Activated naive CD4-positive, alpha-beta T cell treated with anti-CD3 and anti-CD28 coated beads, Interleukin-2, amount 10 ng/mL, durations not matched to agents 7 days and 5 days (primary cell): ENCODE measurements at regions of chr2 and their contacts with region 1.

Region 1: DNA sequence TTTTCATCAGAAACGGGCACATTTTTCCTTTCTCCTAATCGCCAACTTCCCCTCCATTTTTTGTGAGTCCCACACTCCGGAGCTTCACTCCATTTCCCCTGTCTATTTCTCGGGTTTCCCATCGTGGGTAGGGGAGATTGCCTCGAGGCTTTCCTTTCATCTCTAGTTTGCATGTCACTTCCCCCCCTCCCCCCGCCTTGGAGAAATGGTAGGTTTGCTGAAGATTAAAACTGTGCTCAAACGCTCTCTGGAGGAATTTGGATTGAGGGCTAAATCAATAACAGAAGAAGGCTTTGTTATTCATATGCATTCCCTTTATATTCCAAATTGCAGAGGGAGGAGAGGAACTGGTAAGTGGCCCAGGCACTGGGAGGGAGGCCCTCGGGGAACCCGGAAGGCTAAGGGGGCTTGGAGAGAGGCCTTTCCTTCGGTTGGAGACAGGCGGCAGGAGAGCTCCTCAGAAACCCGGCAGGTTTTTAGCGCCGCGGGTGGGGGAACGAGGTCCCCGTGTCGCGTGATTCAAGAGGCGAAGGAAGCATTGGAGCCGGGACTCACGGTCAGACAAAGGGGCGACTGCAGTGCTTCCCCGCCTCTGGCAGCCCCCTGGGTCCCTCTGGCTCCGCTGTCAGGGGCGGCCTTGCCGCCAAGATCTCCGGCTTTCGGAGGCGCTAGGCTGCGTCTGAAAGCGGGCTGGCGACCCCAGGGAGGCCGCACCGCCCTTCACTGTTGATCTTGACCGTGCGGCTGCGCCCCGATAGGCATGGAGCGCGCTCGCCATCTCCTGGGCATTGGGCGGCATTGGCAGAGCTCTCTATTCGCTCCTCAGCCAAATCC is 2.4 kb upstream of the HOXD12 start:
- DNase-seq: peak; percentile 69
- H3K4me3 Mint-ChIP-seq: peak overlapping the region; percentile 65
- H3K27ac Mint-ChIP-seq: no peak overlapping the region
- H3K4me1 Mint-ChIP-seq: peaks cover 25% of the 10 kb centered on the region
- H3K27me3 Mint-ChIP-seq: peaks cover 95% of the 10 kb centered on the region

Region 2: GRCh38 chr2:175690113-175690837 is 406.9 kb before region 1 on chr2:
- CTCF ChIA-PET with region 1: interaction called, 33 read pairs
- DNase-seq: peak; percentile 33
- H3K4me3 Mint-ChIP-seq: no peak overlapping the region
- H3K27ac Mint-ChIP-seq: no peak overlapping the region
- H3K4me1 Mint-ChIP-seq: no peaks in the 10 kb centered on the region
- H3K27me3 Mint-ChIP-seq: peaks cover 4% of the 10 kb centered on the region

Region 3: GRCh38 chr2:176161819-176162626 is 64.8 kb after region 1 on chr2:
- CTCF ChIA-PET with region 1: interaction called, 10 read pairs
- DNase-seq: no peak
- H3K4me3 Mint-ChIP-seq: no peak overlapping the region
- H3K27ac Mint-ChIP-seq: peak overlapping the region; percentile 14
- H3K4me1 Mint-ChIP-seq: peaks cover 5% of the 10 kb centered on the region
- H3K27me3 Mint-ChIP-seq: peaks cover 98% of the 10 kb centered on the region

Region 4: DNA sequence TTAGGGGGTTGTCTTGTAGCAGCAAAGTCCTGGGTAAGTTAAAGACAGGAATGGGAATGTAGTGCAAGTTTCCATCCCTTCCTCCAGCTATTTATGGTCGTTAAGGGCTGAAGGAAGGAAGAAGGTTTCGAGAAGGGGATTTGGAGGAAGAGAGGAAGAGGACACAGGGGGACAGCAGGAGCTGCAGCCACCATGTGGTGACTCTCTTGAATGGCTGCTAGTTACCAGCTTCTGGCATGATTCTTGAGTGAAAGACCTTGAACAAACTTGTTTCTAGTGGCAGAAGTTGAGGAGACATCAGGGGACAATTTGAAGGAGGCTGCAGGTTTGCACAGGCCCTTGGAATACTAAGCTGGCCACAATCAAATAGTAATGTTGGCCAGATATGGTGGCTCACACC is 288.6 kb after region 1 on chr2:
- CTCF ChIA-PET with region 1: no interaction called
- DNase-seq: no peak
- H3K4me3 Mint-ChIP-seq: no peak overlapping the region
- H3K27ac Mint-ChIP-seq: no peak overlapping the region
- H3K4me1 Mint-ChIP-seq: no peaks in the 10 kb centered on the region
- H3K27me3 Mint-ChIP-seq: peaks cover 14% of the 10 kb centered on the region